Thyroid gland (tissue), 4 donors: ENCODE measurements at regions of chr19 and their contacts with region 1.

Region 1: GRCh38 chr19:48271531-48272151 is 1.8 kb downstream of the ZNF114 start:
- DNase-seq: peak; percentile 79 to 83
- H3K4me3 ChIP-seq: peak overlapping the region in 2 of 3 donors; percentile 50 to 53
- H3K27ac ChIP-seq: peak overlapping the region; percentile 81 to 93 (median 92)
- H3K4me1 ChIP-seq: peaks cover 6 to 8% of the 10 kb centered on the region in 2 donors
- H3K27me3 ChIP-seq: no peaks in the 10 kb centered on the region
- CTCF ChIP-seq: no peak
- POLR2A ChIP-seq: peak in 1 of 2 donors; percentile 53

Region 2: GRCh38 chr19:47994209-47994802 is 277.3 kb before region 1 on chr19 and contains the start of gene ELSPBP1:
- intact Hi-C with region 1: no loop called
- DNase-seq: no peak
- H3K4me3 ChIP-seq: no peak within 1 kb of the TSS
- H3K27ac ChIP-seq: no peak within 1 kb of the TSS
- H3K4me1 ChIP-seq: no peaks in the 10 kb centered on the region
- H3K27me3 ChIP-seq: no peaks in the 10 kb centered on the region
- CTCF ChIP-seq: no peak
- POLR2A ChIP-seq: no peak
- total RNA-seq, gene ELSPBP1: not detected

Region 3: GRCh38 chr19:48090281-48090802 is 181.3 kb before region 1 on chr19:
- intact Hi-C with region 1: no loop called
- DNase-seq: no peak
- H3K4me3 ChIP-seq: no peak overlapping the region
- H3K27ac ChIP-seq: no peak overlapping the region
- H3K4me1 ChIP-seq: no peaks in the 10 kb centered on the region
- H3K27me3 ChIP-seq: no peaks in the 10 kb centered on the region
- CTCF ChIP-seq: no peak
- POLR2A ChIP-seq: no peak

Region 4: DNA sequence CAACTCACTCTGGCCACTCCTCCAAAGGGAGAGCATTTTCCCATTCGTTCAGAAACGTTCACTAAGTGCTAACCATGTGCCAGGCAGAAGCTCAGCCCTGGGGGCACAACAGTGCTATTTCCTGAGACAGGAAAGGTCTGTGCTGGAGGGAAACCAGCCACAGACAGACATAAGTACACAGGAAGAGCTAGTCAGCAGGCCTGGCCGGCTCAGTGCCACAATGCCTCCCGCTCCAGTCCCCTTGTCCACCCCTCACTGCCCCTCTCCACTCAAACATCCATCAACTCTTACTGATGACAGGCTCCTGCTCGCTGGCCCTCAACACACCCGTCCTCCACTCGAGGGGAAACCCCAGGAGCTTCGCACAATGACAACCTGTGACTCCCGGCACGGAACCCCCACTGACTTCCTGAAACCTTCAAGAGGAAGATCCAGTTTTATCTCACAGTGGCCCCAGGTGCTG is 149.7 kb before region 1 on chr19:
- intact Hi-C with region 1: no loop called
- DNase-seq: peak; percentile 62 to 68
- H3K4me3 ChIP-seq: no peak overlapping the region
- H3K27ac ChIP-seq: peak overlapping the region; percentile 2 to 45 (median 45)
- H3K4me1 ChIP-seq: peaks cover 0 to 6% of the 10 kb centered on the region in 2 donors
- H3K27me3 ChIP-seq: no peaks in the 10 kb centered on the region
- CTCF ChIP-seq: no peak
- POLR2A ChIP-seq: no peak

Region 5: DNA sequence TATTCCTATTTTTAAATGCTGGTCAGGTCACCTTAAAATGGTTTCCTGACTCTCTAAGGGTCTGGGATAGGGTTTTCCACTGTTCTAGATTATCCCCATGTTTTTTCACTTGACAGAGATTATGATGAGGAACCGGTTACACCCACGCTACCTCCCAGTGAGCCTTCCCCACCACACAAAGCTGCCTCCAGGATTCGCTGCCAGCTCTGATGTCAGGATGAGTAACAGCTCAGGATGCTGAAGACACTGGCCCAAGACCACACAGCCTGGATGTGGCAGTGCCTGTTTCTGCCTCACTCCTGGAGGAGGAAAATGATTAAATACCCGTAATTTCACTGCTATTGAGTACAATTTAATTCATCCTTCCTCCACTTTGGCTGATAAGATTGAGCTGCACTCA is 21.2 kb after region 1 on chr19:
- intact Hi-C with region 1: loop called (anchors 2 kb)
- DNase-seq: no peak
- H3K4me3 ChIP-seq: no peak overlapping the region
- H3K27ac ChIP-seq: no peak overlapping the region
- H3K4me1 ChIP-seq: peaks cover 8% of the 10 kb centered on the region in 2 donors
- H3K27me3 ChIP-seq: no peaks in the 10 kb centered on the region
- CTCF ChIP-seq: no peak
- POLR2A ChIP-seq: no peak

Region 6: GRCh38 chr19:48338802-48339503 is 67.3 kb after region 1 on chr19:
- intact Hi-C with region 1: loop called (anchors 5 kb)
- DNase-seq: no peak
- H3K4me3 ChIP-seq: no peak overlapping the region
- H3K27ac ChIP-seq: no peak overlapping the region
- H3K4me1 ChIP-seq: peaks cover 0 to 7% of the 10 kb centered on the region in 2 donors
- H3K27me3 ChIP-seq: no peaks in the 10 kb centered on the region
- CTCF ChIP-seq: no peak
- POLR2A ChIP-seq: no peak

Region 7: GRCh38 chr19:48372904-48373303 is 101.3 kb after region 1 on chr19:
- intact Hi-C with region 1: no loop called
- DNase-seq: peak; percentile 31 to 47
- H3K4me3 ChIP-seq: no peak overlapping the region
- H3K27ac ChIP-seq: no peak overlapping the region
- H3K4me1 ChIP-seq: no peaks in the 10 kb centered on the region
- H3K27me3 ChIP-seq: no peaks in the 10 kb centered on the region
- CTCF ChIP-seq: no peak
- POLR2A ChIP-seq: no peak